Sigmoid colon (tissue), 7 donors: ENCODE measurements at regions of chr7 and their contacts with region 1.

Region 1: GRCh38 chr7:44581879-44582603 is at the start of gene TMED4:
- DNase-seq: peak; percentile 100
- H3K4me3 ChIP-seq: peak within 1 kb of the TSS; percentile 80 to 98 (median 88)
- H3K27ac ChIP-seq: peak within 1 kb of the TSS; percentile 94 to 98 (median 97)
- H3K4me1 ChIP-seq: peaks cover 0 to 27% (median 21%) of the 10 kb centered on the region in 4 donors
- H3K27me3 ChIP-seq: no peaks in the 10 kb centered on the region
- CTCF ChIP-seq: no peak
- EP300 ChIP-seq: peak in 1 of 4 donors; percentile 33
- POLR2A ChIP-seq: peak; percentile 73 to 76
- total RNA-seq, gene TMED4: 114 to 209 (median 154) TPM

Region 2: GRCh38 chr7:44606450-44607254 is 24.6 kb after region 1 on chr7 and contains the start of gene OGDH:
- intact Hi-C with region 1: loop called (anchors 1 kb)
- DNase-seq: peak; percentile 100
- H3K4me3 ChIP-seq: peak within 1 kb of the TSS; percentile 70 to 97 (median 78)
- H3K27ac ChIP-seq: peak within 1 kb of the TSS; percentile 97 to 100 (median 98)
- H3K4me1 ChIP-seq: peaks cover 0 to 32% (median 25%) of the 10 kb centered on the region in 4 donors
- H3K27me3 ChIP-seq: no peaks in the 10 kb centered on the region
- CTCF ChIP-seq: no peak
- EP300 ChIP-seq: peak in 2 of 4 donors; percentile 66 to 86
- POLR2A ChIP-seq: peak; percentile 57 to 97
- total RNA-seq, gene OGDH: 65.5 to 102 (median 98.3) TPM

Region 3: DNA sequence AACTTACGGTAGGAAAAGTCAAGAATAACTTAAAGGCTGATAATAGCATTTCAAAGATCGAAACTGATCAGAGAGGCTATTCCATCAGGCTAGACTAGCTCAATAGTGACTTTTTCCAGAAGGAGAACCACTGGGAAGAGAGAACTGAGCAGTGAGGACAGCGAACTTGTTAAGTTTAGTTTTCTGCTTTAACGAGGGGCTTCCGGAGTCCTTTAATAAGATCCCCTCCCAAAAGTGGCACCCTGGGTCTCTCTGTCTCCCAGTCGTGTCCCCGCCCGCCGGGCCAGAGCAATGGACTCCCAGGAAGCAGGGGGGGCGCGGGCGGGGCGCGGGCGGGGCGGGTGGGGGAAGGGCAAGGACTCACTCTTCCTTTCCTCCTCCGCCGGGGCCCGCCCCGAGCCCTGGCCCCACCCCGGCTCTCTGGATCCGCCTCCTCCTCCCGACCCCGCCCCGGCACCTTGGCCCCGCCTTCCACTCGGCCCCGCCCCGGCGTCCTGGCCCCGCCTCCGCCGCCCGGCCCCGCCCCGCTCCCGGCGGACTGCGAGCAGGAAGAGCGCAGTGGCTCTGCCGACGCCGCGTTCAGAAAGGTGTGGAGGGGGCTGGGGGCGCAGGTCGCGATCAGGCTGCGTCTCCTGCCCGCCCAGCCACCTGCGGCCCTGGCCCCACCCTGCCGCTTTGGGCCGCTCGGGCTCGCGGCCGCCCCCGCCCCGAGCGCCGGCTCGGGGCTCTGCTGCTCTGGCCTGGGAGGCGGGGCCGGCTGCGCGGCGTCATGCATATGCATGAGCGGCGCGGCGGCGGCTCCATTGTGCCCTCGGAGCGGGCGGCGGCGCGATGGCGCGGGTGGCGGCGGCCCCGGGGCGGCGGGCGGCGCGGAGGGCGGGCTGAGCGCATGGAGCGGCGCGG is 166.3 kb after region 1 on chr7 and contains the start of gene ZMIZ2:
- intact Hi-C with region 1: loop called (anchors 5 kb)
- DNase-seq: peak; percentile 97
- H3K4me3 ChIP-seq: peak within 1 kb of the TSS; percentile 56 to 96 (median 78)
- H3K27ac ChIP-seq: peak within 1 kb of the TSS; percentile 94 to 97 (median 95)
- H3K4me1 ChIP-seq: peaks cover 0 to 32% (median 23%) of the 10 kb centered on the region in 4 donors
- H3K27me3 ChIP-seq: no peaks in the 10 kb centered on the region
- CTCF ChIP-seq: no peak
- EP300 ChIP-seq: no peak
- POLR2A ChIP-seq: peak in 1 of 2 donors; percentile 13
- total RNA-seq, gene ZMIZ2: 11.1 to 44.6 (median 12.5) TPM

Region 4: DNA sequence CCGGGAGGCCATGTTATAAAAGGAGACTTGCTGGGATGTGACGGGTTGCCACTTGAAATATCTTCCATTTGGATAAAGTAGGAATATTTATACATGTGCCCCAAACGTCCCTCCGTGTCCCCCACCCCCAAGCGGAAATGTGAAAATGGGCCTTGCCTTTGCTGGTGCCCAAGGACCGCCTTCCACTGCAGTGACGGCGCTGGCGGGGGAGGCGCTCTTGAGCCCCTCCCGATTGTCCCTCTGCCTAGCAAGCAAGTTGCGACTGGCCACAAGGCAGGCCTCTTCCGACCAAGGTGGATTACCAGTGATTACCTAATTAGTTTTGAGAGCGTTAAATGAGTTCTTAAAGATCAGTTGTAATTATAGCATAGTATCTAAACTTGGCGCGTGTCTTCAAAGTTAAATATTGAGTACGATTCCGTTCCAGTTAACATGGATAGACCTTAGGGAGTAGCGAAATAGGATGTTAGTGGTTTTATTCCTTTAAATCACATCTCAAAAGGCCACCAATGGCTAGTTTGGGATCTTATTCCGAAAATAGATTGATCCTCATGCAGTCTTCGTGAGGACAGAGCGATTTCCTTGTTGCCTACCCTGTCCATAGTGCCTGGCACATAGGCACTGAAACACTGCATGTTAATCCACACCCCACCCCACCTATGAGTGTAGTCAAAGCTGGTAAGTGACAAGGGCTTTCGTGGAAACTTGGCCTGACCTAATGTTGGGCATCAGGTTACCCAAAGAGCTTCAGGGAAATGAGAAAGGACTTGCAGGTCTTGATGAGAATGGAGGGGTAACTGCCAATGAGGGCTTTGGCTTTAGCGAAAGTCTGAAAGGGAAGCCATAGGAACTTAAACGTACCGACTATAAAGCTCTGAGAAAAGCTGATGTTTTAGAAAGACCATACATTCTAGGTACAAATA is 215.5 kb after region 1 on chr7:
- intact Hi-C with region 1: loop called (anchors 5 kb)
- DNase-seq: peak; percentile 95
- H3K4me3 ChIP-seq: peak overlapping the region; percentile 76 to 97 (median 95)
- H3K27ac ChIP-seq: peak overlapping the region; percentile 99 to 100 (median 100)
- H3K4me1 ChIP-seq: peaks cover 0 to 35% (median 26%) of the 10 kb centered on the region in 4 donors
- H3K27me3 ChIP-seq: no peaks in the 10 kb centered on the region
- CTCF ChIP-seq: peak in 2 of 4 experiments; percentile 31 to 35
- EP300 ChIP-seq: no peak
- POLR2A ChIP-seq: peak; percentile 10 to 29

Region 5: DNA sequence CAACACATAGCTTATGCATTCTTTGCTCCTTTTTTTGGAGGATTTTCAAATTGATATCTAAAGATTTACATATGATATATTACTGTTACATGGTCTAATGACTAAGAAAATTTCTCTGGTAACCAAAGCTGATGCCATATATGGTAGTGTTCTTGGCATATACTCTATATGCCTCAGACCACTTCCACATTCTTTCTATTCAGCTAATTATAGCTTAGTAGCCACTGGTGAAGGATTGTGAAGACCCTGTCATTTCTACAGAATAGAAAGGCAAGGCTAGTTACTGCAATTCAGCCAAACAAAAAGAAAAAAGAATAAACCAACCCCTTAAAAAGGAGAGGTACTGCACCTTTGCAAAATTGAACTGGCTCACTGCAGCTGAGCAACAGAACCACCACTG is 299.6 kb after region 1 on chr7:
- intact Hi-C with region 1: no loop called
- DNase-seq: no peak
- H3K4me3 ChIP-seq: peak overlapping the region in 3 of 4 donors; percentile 11 to 93 (median 35)
- H3K27ac ChIP-seq: peak overlapping the region; percentile 4 to 100 (median 72)
- H3K4me1 ChIP-seq: peaks cover 0 to 83% (median 72%) of the 10 kb centered on the region in 4 donors
- H3K27me3 ChIP-seq: no peaks in the 10 kb centered on the region
- CTCF ChIP-seq: no peak
- EP300 ChIP-seq: no peak
- POLR2A ChIP-seq: no peak

Region 6: GRCh38 chr7:44986218-44987053 is 404.4 kb after region 1 on chr7:
- intact Hi-C with region 1: loop called (anchors 10 kb)
- DNase-seq: peak; percentile 96
- H3K4me3 ChIP-seq: peak overlapping the region; percentile 38 to 62 (median 55)
- H3K27ac ChIP-seq: peak overlapping the region; percentile 88 to 94 (median 91)
- H3K4me1 ChIP-seq: peaks cover 0 to 25% (median 16%) of the 10 kb centered on the region in 4 donors
- H3K27me3 ChIP-seq: no peaks in the 10 kb centered on the region
- CTCF ChIP-seq: no peak
- EP300 ChIP-seq: peak in 2 of 4 donors; percentile 1 to 10
- POLR2A ChIP-seq: peak; percentile 91 to 93